ENCODE measurements at regions of chr1 and their contacts with region 1.

Region 1: GRCh38 chr1:67174716-67175284 is 8.5 kb downstream of the IL23R start:
- DNase-seq: no peak
- ATAC-seq: peak; percentile 72
- H3K4me3 ChIP-seq: no peak overlapping the region
- H3K27ac ChIP-seq: no peak overlapping the region
- H3K4me1 ChIP-seq: peaks cover 16% of the 10 kb centered on the region
- H3K27me3 ChIP-seq: no peaks in the 10 kb centered on the region
- CTCF ChIP-seq: no peak
- EP300 ChIP-seq: peak in 1 of 2 experiments; percentile 9; a peak in 1 of 4 replicates
- POLR2A ChIP-seq: no peak
- RAD21 ChIP-seq: no peak

Region 2: DNA sequence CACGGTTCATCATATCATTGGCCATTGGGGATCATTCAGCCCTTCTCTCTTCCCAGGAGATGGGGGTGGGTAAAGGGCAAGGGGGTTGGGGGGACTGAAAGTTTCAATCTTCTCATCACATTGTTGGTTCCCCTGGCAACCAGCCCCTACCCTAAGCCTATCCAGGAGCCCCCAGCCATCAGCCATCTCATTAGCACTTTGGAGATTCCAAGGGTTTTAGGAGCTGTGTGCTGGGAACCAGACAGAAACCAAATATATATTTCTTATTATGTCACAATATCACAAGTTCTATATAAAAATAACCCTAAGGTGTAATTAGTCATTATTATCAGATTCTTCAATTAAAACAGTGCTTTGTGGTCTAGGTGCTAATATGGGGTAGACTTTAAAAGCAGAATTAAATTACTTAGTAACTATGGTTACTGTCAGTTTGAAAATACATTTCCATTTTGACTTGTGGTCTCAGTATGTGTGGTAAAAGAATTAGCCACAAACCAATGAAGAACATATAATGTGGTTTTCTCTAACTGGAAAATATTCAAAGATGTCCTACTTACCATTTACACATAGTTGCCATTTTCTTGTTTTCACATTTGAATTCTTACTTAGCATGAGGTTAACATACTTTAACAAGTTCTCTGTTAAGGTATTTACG is 19.5 kb after region 1 on chr1:
- CTCF ChIA-PET with region 1: interaction called, 23 read pairs
- POLR2A ChIA-PET with region 1: interaction called, 4 read pairs
- RAD21 ChIA-PET with region 1: interaction called, 8 read pairs
- SMC1A ChIA-PET with region 1: interaction called, 40 read pairs
- in situ Hi-C with region 1: no loop called
- intact Hi-C with region 1: loop called (anchors 2 kb)
- DNase-seq: peak; percentile 67
- ATAC-seq: peak; percentile 75
- H3K4me3 ChIP-seq: no peak overlapping the region
- H3K27ac ChIP-seq: no peak overlapping the region
- H3K4me1 ChIP-seq: peaks cover 20% of the 10 kb centered on the region
- H3K27me3 ChIP-seq: no peaks in the 10 kb centered on the region
- CTCF ChIP-seq: no peak
- EP300 ChIP-seq: peak; percentile 94 to 97
- POLR2A ChIP-seq: no peak
- RAD21 ChIP-seq: no peak

Region 3: DNA sequence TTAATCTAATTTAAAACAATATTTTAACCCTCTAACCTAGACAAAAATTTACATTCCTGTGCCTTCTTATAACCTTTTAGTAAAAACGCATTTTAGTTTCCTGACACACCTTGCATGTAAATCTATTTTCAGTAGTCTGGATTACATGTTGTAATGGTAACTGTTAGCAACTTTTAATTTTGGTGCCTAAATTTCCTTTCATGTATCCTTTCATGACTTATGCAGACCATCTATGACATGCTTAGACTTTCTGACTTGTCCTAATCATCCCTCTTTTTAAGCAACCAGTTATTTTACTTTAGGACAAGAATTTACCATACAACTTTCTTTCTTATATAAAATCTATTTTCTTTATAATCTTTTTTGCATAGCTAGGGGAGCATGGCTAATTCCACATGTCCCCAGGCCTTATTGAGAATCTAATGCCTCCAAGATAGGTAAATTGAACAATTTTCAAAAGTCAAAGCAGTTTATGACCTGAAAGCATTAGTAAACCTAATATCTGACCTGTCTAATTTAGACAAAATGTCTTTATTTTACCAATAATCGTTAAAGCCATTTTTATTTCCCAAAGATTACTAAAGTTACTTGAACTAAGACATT is 75.4 kb after region 1 on chr1:
- CTCF ChIA-PET with region 1: no interaction called
- POLR2A ChIA-PET with region 1: no interaction called
- RAD21 ChIA-PET with region 1: no interaction called
- SMC1A ChIA-PET with region 1: no interaction called
- in situ Hi-C with region 1: no loop called
- intact Hi-C with region 1: no loop called
- DNase-seq: no peak
- ATAC-seq: no peak
- H3K4me3 ChIP-seq: no peak overlapping the region
- H3K27ac ChIP-seq: no peak overlapping the region
- H3K4me1 ChIP-seq: no peaks in the 10 kb centered on the region
- H3K27me3 ChIP-seq: no peaks in the 10 kb centered on the region
- CTCF ChIP-seq: no peak
- EP300 ChIP-seq: no peak
- POLR2A ChIP-seq: no peak
- RAD21 ChIP-seq: no peak

Region 4: DNA sequence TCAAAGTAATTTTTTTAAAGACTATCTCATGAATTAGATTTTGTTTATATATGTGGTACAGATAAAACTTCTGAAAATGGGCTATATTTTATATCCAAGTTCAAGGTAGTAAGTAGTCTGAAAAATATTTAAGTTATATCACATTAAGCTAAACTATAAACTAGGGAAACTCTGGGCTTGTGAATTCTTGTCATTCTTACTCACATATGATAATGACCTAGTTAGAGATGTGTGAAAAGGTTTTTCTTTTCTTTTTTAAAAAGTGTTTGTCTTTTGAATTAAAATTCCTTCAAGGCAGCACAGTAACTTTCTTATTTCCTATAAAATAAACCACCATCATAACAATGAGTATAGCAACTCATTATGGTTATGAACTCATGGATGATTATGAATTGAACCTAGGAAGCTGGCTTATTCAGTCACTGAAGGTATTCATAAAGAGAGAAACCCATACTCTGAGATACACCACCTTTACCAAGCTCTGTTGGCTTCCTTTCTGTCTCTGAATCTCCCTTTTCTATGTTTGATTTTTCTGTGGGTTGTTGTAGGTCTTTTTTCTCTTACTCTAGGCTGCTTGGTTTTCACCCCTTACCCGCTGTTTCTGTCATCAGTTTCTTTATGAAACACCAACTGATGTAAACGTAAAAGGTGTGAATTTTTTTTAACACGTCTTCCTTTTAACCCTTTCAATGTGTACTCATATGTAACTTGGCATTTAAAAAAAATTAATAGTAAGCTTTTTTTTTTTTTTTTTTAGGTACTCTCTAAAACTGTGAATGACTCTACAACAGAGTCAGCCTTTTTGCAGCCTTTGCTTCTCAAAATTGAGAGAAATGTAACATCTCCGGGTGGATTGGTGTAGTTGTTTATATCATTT is 158.1 kb after region 1 on chr1:
- CTCF ChIA-PET with region 1: no interaction called
- POLR2A ChIA-PET with region 1: no interaction called
- RAD21 ChIA-PET with region 1: no interaction called
- SMC1A ChIA-PET with region 1: no interaction called
- in situ Hi-C with region 1: no loop called
- intact Hi-C with region 1: loop called (anchors 5 kb)
- DNase-seq: peak; percentile 91
- ATAC-seq: peak; percentile 97
- H3K4me3 ChIP-seq: no peak overlapping the region; the same call in 1 of the 2 replicates
- H3K27ac ChIP-seq: peak overlapping the region; percentile 83
- H3K4me1 ChIP-seq: peaks cover 51% of the 10 kb centered on the region
- H3K27me3 ChIP-seq: peaks cover 0 to 2% of the 10 kb centered on the region in 2 experiments; a peak in 1 of 4 replicates
- CTCF ChIP-seq: no peak
- EP300 ChIP-seq: peak; percentile 99
- POLR2A ChIP-seq: no peak
- RAD21 ChIP-seq: peak; percentile 17; the same call in 1 of the 2 replicates

Measured in GM12878 (cell line).